Activated CD4-positive, alpha-beta T cell treated with anti-CD3 and anti-CD28 coated beads for 36 hours (primary cell): ENCODE measurements at regions of chr20 and their contacts with region 1.

Region 1: GRCh38 chr20:17995967-17996819 is 27.4 kb downstream of the MGME1 start:
- DNase-seq: peak; percentile 56
- ATAC-seq: peak; percentile 60
- H3K4me3 Mint-ChIP-seq: no peak overlapping the region
- H3K27ac Mint-ChIP-seq: no peak overlapping the region
- H3K4me1 Mint-ChIP-seq: peaks cover 27% of the 10 kb centered on the region
- H3K27me3 Mint-ChIP-seq: no peaks in the 10 kb centered on the region

Region 2: GRCh38 chr20:16801919-16802911 is 1194.0 kb before region 1 on chr20:
- CTCF ChIA-PET with region 1: no interaction called
- POLR2A ChIA-PET with region 1: no interaction called
- intact Hi-C with region 1: loop called in 1 of 2 experiments (anchors 2 kb)
- DNase-seq: peak; percentile 79
- ATAC-seq: no peak
- H3K4me3 Mint-ChIP-seq: no peak overlapping the region
- H3K27ac Mint-ChIP-seq: no peak overlapping the region
- H3K4me1 Mint-ChIP-seq: no peaks in the 10 kb centered on the region
- H3K27me3 Mint-ChIP-seq: peaks cover 43% of the 10 kb centered on the region

Region 3: GRCh38 chr20:17536944-17537444 is 459.2 kb before region 1 on chr20:
- CTCF ChIA-PET with region 1: interaction called, 3 read pairs
- POLR2A ChIA-PET with region 1: no interaction called
- intact Hi-C with region 1: loop called (anchors 2 to 10 kb)
- DNase-seq: peak; percentile 78
- ATAC-seq: peak; percentile 92
- H3K4me3 Mint-ChIP-seq: no peak overlapping the region
- H3K27ac Mint-ChIP-seq: no peak overlapping the region
- H3K4me1 Mint-ChIP-seq: peaks cover 14% of the 10 kb centered on the region
- H3K27me3 Mint-ChIP-seq: peaks cover 11% of the 10 kb centered on the region

Region 4: DNA sequence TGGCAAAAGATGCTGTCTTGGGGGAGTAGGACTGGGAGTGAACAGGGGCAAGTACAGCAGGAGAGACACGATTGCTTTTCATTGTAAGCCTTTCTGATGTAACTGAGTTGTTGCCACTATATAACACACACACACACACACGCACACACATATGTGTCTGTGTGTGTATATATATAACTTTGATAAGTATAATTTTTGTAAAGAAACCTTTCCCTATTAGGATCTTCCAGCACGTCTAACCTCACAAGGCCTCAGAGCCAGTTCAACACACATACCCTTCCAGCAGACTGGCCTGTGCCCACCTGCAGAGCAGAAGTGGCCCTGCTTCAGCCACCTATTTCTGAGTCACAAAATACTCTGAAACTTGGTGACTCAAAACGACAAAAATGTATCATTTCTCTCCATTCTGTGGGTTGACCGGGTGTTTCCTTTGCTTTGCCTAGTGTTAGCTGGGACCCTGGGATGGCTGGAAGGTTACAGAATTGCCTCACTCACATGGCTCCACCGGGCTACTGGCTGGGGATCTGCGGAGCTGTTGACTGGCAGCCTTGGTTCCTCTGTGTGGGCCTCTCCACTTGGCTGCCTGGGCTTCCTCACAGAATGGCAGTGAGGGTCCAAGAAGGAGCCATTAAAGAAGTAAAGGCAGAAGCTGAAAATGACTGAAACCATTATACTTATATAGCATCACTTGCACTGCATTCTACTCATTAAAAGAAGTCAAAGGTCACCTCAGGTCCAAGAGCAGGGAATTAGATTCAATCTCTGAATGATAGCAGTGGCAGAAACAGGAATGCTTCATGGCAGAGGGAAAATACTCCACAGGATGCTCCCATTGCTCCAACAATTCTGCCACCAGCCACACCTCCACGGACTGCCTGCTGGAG is 170.0 kb before region 1 on chr20:
- CTCF ChIA-PET with region 1: no interaction called
- POLR2A ChIA-PET with region 1: no interaction called
- intact Hi-C with region 1: loop called in 1 of 2 experiments (anchors 1 kb)
- DNase-seq: peak; percentile 56
- ATAC-seq: peak; percentile 91
- H3K4me3 Mint-ChIP-seq: no peak overlapping the region
- H3K27ac Mint-ChIP-seq: no peak overlapping the region
- H3K4me1 Mint-ChIP-seq: peaks cover 11% of the 10 kb centered on the region
- H3K27me3 Mint-ChIP-seq: no peaks in the 10 kb centered on the region

Region 5: DNA sequence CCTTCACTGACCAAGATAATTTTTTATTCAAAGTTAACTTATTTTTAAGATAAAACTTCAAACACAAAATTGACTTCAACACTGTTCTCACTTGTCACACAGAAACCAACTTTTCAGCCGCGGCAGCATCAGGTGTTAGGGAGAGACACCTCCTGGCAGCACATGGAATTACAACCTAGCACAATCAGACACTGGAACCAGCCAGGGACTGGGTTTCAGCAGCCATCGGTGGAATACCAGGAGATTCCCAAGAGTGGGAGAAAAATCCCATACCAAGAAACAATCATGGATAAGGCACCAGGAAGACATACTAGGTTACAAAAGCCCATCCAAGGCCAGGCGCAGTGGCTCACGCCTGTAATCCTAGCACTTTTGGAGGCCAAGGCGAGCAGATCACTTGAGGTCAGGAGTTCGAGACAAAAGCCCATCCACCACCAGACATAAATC is 97.6 kb before region 1 on chr20:
- CTCF ChIA-PET with region 1: interaction called, 9 read pairs
- POLR2A ChIA-PET with region 1: no interaction called
- intact Hi-C with region 1: loop called (anchors 2 to 10 kb)
- DNase-seq: peak; percentile 80
- ATAC-seq: peak; percentile 47
- H3K4me3 Mint-ChIP-seq: no peak overlapping the region
- H3K27ac Mint-ChIP-seq: no peak overlapping the region
- H3K4me1 Mint-ChIP-seq: peaks cover 17% of the 10 kb centered on the region
- H3K27me3 Mint-ChIP-seq: peaks cover 27% of the 10 kb centered on the region

Region 6: DNA sequence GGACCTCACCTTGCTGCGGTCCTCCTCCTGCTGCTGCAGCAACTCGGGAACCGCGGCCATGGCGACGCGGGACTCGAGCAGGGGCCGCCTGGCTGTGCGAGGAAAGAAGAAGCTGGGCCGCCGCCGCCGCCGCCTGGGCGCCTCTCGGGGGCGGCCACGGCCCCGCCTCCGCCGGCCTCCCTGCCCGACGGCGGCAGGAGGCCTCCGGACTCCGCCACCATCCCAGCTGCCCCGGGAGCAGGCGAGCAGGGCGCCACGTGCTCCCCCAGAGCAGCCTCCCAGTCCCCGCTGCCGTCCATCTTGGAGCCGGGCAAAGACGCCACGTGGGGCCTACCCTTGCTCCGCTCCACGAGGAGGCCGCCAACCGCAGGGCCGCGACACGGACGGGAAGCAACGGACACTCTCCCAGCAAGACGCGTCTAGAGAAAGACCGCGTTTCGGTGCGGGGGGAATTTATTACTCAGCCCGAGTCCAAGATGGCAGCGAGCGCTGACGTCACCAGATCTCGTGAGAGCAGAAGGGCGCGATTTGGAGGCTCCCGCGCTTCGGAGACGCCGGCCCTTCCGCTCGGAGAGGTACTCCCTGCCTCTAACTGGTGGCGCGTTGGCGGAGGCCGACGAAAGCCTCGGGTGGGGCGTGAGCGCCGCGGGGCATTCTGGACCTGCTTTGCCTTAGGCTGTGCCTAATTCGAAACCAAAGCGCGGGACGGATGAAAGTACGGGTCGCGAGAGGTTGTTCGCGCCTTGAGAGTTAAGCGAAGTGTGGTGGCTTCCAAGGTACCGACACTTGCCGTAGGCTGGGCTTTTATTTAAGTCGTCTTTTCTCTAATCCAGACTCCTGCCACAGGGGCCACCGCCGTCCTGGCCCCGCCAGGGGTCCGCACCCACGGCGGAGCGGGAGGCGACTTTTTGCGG is 27.6 kb before region 1 on chr20 and contains the starts of genes MGME1 and SNX5:
- CTCF ChIA-PET with region 1: interaction called, 11 read pairs
- POLR2A ChIA-PET with region 1: interaction called, 6 read pairs
- intact Hi-C with region 1: loop called (anchors 1 kb)
- DNase-seq: peak; percentile 100
- ATAC-seq: peak; percentile 91
- H3K4me3 Mint-ChIP-seq: peak within 1 kb of the TSS; percentile 87
- H3K27ac Mint-ChIP-seq: peak within 1 kb of the TSS; percentile 99
- H3K4me1 Mint-ChIP-seq: peaks cover 49% of the 10 kb centered on the region
- H3K27me3 Mint-ChIP-seq: no peaks in the 10 kb centered on the region
- total RNA-seq, gene MGME1: 24.1 to 29.7 TPM
- total RNA-seq, gene SNX5: 204 to 227 TPM

Region 7: GRCh38 chr20:18507218-18508021 is 511.2 kb after region 1 on chr20 and contains the start of gene SEC23B:
- CTCF ChIA-PET with region 1: no interaction called
- POLR2A ChIA-PET with region 1: no interaction called
- intact Hi-C with region 1: loop called in 1 of 2 experiments (anchors 10 kb)
- DNase-seq: peak; percentile 99
- ATAC-seq: peak; percentile 94
- H3K4me3 Mint-ChIP-seq: peak within 1 kb of the TSS; percentile 99
- H3K27ac Mint-ChIP-seq: peak within 1 kb of the TSS; percentile 100
- H3K4me1 Mint-ChIP-seq: peaks cover 48% of the 10 kb centered on the region
- H3K27me3 Mint-ChIP-seq: no peaks in the 10 kb centered on the region
- total RNA-seq, gene SEC23B: 95.3 to 119 TPM